AG04450 (cell line): ENCODE measurements at regions of chr10 and their contacts with region 1.

Region 1: DNA sequence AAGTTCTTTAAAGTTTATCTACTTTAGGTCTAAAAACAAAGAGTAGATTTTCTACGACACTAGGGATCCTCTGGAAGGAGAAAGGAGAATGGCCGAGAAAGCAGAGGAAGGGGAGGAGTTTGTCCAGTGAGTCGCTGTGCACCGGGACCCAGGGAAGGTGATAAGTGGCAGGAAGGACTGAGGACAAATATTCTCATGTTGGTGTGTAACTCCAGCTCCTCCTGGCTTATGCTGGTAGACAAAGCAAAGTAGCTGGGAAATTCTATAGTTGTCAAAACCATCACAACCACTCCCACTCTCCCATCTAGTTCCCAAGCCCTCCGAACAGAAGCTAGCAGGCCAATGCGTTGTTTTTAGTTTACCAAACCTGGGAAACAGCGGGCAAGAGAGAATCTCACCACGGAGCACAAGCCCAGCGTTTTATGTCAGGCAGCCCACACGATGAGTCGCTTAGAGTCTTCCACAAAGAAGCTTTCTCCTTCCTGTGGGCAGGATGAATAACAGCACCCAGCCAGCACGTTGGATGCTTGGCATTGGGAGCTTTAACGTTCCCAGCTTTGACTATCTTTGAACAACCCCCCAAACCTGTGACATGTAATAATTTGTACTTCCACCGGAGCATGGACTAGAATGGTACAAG is 32.9 kb upstream of the JCAD start:
- DNase-seq: peak; percentile 24
- H3K4me3 ChIP-seq: no peak overlapping the region
- H3K27ac ChIP-seq: peak overlapping the region; percentile 31
- H3K27me3 ChIP-seq: peaks cover 2% of the 10 kb centered on the region
- CTCF ChIP-seq: no peak

Region 2: GRCh38 chr10:30309401-30309800 is 217.1 kb after region 1 on chr10:
- CTCF ChIA-PET with region 1: interaction called, 10 read pairs
- POLR2A ChIA-PET with region 1: no interaction called
- DNase-seq: no peak
- H3K4me3 ChIP-seq: no peak overlapping the region
- H3K27ac ChIP-seq: no peak overlapping the region
- H3K27me3 ChIP-seq: no peaks in the 10 kb centered on the region
- CTCF ChIP-seq: 0 out of 2 replicates have a peak, but pooled peaks have one; percentile 6

Region 3: DNA sequence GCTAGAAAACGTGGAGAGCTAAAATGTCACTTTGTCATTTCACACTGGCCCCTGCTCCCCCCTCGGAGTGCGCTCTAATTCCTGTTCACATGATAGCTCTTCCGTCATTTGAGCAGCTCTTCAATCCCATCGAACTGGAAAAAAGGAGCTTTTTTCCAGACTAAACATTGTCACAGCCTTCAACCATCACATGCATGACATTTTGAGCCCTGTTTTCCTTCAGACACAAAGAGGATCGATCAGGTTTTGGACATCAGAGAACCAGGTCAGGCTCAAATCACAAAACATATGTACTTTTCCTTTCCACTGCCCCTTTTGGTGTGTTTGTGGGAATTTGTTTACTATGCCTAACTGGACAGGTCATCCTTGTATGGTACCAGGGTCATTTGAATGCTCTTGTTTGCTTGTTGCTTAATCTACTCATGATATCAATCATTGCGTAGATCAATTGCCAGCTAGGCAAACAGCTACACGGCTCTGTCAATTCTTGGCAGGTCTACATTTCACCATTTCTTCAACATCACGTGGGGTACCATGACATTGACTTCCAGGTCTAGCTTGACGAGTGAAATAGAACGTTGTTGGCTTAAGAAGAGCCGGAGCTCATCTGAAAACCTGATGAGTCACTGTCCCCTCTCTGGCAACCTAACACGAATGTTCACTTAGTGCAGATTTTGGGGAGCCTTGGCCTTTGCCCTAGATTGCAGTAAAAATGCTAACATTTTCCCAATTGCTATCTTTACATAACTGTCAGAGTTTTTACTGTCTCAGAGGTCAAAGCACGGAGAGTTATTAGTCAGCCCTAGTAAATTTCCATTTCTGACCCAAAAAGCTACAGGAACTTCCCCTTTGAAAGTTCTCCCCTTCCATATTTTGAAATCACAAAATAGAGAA is 450.0 kb after region 1 on chr10:
- CTCF ChIA-PET with region 1: no interaction called
- POLR2A ChIA-PET with region 1: no interaction called
- DNase-seq: no peak
- H3K4me3 ChIP-seq: no peak overlapping the region
- H3K27ac ChIP-seq: no peak overlapping the region
- H3K27me3 ChIP-seq: peaks cover 5% of the 10 kb centered on the region
- CTCF ChIP-seq: no peak